Astrocyte of the cerebellum (primary cell): ENCODE measurements at regions of chr5 and their contacts with region 1.

Region 1: GRCh38 chr5:179827680-179828079 is 7.0 kb downstream of the SQSTM1 start:
- DNase-seq: no peak
- H3K4me3 ChIP-seq: no peak overlapping the region
- CTCF ChIP-seq: no peak

Region 2: DNA sequence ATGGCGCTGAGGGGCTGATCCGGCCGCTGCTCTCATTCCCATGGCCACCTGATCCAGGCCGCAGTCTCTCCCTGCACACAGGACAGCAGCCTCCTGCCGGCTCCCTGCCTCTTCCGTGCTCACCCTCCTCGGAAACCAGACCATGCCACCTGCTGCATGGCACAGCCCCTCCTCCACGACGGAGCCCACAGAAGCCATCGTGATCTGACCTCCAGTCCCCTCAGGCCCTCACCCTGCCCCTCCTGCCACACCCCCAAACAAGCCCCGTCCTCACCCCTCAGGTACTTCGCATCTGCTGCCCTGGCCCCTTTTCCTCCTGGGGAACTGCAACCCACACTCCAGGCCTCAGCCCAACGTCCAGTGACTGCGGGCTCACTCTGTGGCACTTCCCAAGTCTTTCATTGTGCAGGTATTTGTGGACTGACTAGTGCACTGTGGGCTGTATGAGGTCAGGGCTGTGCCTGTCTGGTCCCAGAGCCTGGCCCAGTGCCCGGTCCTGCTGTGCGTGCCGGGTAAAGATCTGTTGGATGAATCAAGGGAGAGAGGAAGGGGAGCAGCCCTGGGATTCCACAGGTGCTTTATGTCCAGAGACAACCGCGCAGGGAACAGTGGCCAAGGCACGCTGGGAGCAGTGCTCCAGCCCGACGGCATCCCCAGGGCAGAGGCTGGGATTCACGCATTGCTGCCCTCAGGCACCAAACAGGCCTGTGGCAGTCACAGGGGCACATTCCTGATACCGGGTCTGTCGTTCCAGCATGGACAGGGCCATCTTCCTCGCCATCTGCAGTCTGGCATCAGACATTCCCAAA is 568.6 kb before region 1 on chr5:
- in situ Hi-C with region 1: no loop called
- DNase-seq: peak; percentile 44
- H3K4me3 ChIP-seq: no peak overlapping the region
- CTCF ChIP-seq: no peak

Region 3: DNA sequence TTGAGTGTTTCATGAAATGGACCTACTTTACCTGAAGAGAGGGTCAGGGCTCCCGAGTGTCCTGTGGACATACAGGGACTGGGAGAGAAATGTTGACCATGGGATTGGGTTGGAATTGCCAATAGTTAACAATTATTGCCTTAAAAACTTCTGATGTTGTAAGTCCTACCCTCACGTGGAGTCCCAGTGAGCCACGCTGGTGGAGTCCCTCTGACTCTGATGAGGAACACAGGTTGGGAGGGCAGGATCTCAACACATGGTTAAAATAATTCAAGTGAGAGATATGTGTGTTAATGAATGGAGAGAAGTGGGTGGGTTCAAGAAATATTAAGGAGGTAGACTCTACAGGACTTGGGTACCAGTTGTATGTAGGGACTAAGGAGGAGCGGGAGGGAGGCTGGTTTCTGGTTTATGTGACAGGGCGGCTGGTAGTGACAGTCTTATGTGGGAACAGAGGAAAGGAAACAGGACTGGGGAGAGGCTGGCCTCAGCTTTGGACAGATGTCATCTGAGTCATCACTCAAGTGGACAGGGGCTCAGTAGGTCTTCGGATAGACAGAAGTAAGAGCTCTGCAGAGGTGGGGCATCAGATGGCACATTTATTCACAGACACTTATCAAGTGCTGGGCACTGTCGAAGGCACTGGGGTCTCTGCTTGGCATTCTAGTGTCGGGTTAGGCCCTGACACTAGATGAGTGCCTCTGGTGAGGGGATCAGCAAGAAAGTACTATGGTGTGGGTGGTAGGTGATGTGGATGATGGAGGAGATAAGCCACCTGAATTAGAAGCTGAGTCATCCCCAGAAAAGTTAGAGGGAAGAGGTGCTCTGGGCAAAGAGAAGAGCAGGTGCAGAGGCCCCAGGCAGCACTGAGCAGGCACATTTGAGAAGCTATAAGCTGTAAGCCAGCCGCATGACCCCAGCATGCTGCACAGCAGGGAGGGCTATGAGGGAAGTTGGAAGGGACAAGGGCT is 67.8 kb before region 1 on chr5:
- in situ Hi-C with region 1: loop called (anchors 5 kb)
- DNase-seq: no peak
- H3K4me3 ChIP-seq: no peak overlapping the region
- CTCF ChIP-seq: no peak

Region 4: DNA sequence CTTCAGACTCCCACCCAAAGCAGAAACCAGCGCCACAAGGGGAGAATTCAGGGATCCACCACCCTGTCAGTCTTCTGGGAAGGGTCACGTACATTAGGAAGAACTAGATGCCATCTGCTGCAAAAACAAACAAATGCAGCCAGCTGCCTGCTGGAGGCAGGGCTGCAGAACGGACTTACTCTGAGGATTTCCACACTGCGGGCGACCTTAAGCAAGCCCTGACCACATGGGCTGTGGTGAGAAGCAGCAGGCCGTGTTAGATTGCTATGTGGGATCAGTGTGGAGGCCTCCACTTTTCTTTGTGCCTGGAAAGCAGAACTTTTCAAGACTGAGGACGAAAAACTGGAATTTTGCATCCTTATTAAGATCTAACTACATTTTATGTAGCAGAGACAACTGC is 47.3 kb before region 1 on chr5:
- in situ Hi-C with region 1: no loop called
- DNase-seq: no peak
- H3K4me3 ChIP-seq: no peak overlapping the region
- CTCF ChIP-seq: no peak

Region 5: GRCh38 chr5:180990086-180990881 is 1162.6 kb after region 1 on chr5:
- in situ Hi-C with region 1: no loop called
- DNase-seq: no peak
- H3K4me3 ChIP-seq: no peak overlapping the region
- CTCF ChIP-seq: no peak